K562 (cell line): ENCODE measurements at regions of chr12 and their contacts with region 1.

Region 1: GRCh38 chr12:130041983-130042812 is 120.1 kb upstream of the FZD10 start:
- DNase-seq: peak; percentile 29 to 64 (median 58)
- ATAC-seq: peak; percentile 86
- H3K4me3 ChIP-seq: no peak overlapping the region
- H3K27ac ChIP-seq: no peak overlapping the region
- H3K4me1 ChIP-seq: no peaks in the 10 kb centered on the region
- H3K27me3 ChIP-seq: peaks cover 0 to 5% of the 10 kb centered on the region in 2 experiments; a peak in 2 of 5 replicates
- CTCF ChIP-seq: peak; percentile 48 to 62 (median 56)
- EP300 ChIP-seq: no peak
- POLR2A ChIP-seq: no peak
- RAD21 ChIP-seq: no peak; a peak in 1 of 4 replicates

Region 2: GRCh38 chr12:129959889-129960288 is 82.3 kb before region 1 on chr12:
- CTCF ChIA-PET with region 1: no interaction called
- POLR2A ChIA-PET with region 1: no interaction called
- in situ Hi-C with region 1: no loop called
- intact Hi-C with region 1: no loop called
- DNase-seq: no peak
- ATAC-seq: no peak
- H3K4me3 ChIP-seq: no peak overlapping the region
- H3K27ac ChIP-seq: no peak overlapping the region
- H3K4me1 ChIP-seq: no peaks in the 10 kb centered on the region
- H3K27me3 ChIP-seq: no peaks in the 10 kb centered on the region
- CTCF ChIP-seq: no peak
- EP300 ChIP-seq: no peak
- POLR2A ChIP-seq: no peak
- RAD21 ChIP-seq: no peak

Region 3: DNA sequence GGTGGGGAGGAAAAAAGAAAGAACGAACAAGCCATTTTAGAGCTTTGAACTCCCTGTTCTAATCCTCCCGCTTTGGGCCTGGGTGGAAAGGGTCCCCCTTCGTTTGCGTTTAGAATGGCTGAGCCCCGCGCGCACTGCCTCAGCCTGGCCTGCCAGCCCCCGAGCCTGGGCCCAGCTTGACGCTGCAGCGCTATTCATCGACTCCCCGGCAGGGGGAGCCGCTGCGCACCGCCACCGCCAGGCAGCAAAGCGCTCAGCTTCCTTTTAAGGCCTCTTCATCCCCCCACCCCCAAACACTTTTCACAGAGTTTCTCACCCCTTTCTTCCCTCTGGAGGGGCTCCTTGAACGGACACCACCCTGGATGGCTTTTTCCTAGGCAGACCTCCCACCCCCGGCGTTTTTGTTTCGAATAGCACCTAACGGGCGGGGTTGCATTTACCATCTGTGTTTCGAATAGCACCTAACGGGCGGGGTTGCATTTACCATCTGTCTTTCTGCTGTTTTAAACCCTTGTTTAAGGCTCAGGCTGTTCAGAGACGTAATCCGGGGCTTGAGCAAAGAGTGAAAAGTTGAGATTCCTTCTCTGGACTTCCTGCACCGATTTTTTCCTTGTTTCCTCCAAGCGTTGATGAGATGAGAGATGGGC is 239.1 kb after region 1 on chr12:
- CTCF ChIA-PET with region 1: no interaction called
- POLR2A ChIA-PET with region 1: no interaction called
- in situ Hi-C with region 1: no loop called
- intact Hi-C with region 1: loop called (anchors 5 kb)
- DNase-seq: peak; percentile 50 to 67 (median 66)
- ATAC-seq: peak; percentile 96
- H3K4me3 ChIP-seq: no peak overlapping the region
- H3K27ac ChIP-seq: no peak overlapping the region
- H3K4me1 ChIP-seq: no peaks in the 10 kb centered on the region; a peak in 1 of 5 replicates
- H3K27me3 ChIP-seq: no peaks in the 10 kb centered on the region; a peak in 1 of 5 replicates
- CTCF ChIP-seq: peak; percentile 70 to 88 (median 83)
- EP300 ChIP-seq: no peak
- POLR2A ChIP-seq: no peak
- RAD21 ChIP-seq: peak in 1 of 2 experiments; percentile 36; a peak in 2 of 4 replicates